ENCODE measurements at regions of chr18 and their contacts with region 1.

Region 1: GRCh38 chr18:56869189-56869777 is 218.1 kb downstream of the WDR7 start:
- DNase-seq: no peak
- ATAC-seq: peak; percentile 46 to 56
- H3K4me3 ChIP-seq: no peak overlapping the region
- H3K27ac ChIP-seq: no peak overlapping the region
- H3K4me1 ChIP-seq: no peaks in the 10 kb centered on the region
- H3K27me3 ChIP-seq: no peaks in the 10 kb centered on the region
- CTCF ChIP-seq: peak; percentile 28 to 69 (median 51)
- POLR2A ChIP-seq: no peak

Region 2: DNA sequence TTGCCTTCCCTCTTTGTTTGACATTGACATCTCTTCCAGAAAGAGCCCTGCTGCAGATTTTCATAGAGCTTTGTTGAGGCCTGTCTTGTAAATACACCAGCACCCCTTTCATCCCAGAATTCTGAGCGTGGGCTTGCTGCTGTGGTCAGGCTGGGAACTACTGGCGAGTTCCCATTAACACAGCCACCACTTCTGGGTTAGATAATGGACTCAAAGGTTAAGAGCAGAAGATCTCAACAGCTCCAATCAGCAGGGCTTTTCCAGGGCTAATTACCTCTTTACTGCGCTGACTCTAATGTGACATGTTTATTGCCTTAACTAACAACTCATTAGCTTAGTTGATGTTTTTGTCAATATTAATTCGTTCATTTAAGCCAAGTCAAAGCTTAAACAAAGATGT is 41.7 kb after region 1 on chr18:
- in situ Hi-C with region 1: no loop called
- intact Hi-C with region 1: loop called (anchors 10 kb)
- DNase-seq: no peak
- ATAC-seq: no peak
- H3K4me3 ChIP-seq: no peak overlapping the region
- H3K27ac ChIP-seq: no peak overlapping the region
- H3K4me1 ChIP-seq: no peaks in the 10 kb centered on the region
- H3K27me3 ChIP-seq: no peaks in the 10 kb centered on the region
- CTCF ChIP-seq: no peak
- POLR2A ChIP-seq: no peak

Region 3: DNA sequence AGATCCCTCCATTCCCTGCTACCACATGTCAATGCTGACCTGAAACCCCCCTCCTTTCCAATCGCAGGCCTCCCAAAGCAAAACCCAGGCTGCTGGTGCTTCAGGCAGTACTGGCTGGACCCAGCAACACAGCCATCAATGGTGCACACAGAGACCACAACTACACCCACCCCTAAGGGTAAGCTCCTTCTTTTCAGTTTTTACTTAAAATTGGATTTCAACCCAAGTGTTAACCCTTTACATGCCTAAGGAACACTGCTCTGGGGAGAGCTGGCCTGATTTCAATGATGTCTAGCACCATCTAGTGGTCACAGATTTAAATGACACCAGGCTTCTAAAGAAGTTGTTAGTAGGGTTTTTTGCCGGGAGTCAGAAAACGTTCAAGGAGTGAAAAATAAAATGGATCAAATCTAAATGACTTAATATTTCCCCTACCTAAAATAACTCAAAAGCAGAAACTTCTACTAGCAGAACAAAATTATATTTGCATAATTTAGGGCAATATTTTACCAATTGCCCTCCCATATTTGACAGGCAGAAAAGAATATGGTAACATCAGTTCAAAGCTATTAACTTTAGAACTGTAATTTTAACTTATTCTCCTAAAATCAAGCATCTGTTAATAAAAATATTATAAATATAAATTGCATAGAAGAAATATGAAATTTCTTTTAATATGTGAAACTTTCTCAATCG is 692.6 kb after region 1 on chr18:
- in situ Hi-C with region 1: no loop called
- intact Hi-C with region 1: loop called (anchors 10 kb)
- DNase-seq: no peak
- ATAC-seq: peak in 1 of 2 donors; percentile 49
- H3K4me3 ChIP-seq: no peak overlapping the region
- H3K27ac ChIP-seq: no peak overlapping the region
- H3K4me1 ChIP-seq: no peaks in the 10 kb centered on the region
- H3K27me3 ChIP-seq: no peaks in the 10 kb centered on the region
- CTCF ChIP-seq: peak; percentile 56 to 85 (median 70)
- POLR2A ChIP-seq: no peak